H1 (cell line): ENCODE measurements at regions of chrX and their contacts with region 1.

Region 1: GRCh38 chrX:102899940-102900916 is 36.8 kb upstream of the RAB40AL start:
- DNase-seq: peak in 1 of 2 experiments; percentile 84
- H3K4me3 ChIP-seq: no peak overlapping the region
- H3K27ac ChIP-seq: no peak overlapping the region
- H3K4me1 ChIP-seq: no peaks in the 10 kb centered on the region
- H3K27me3 ChIP-seq: no peaks in the 10 kb centered on the region
- CTCF ChIP-seq: peak; percentile 58 to 67 (median 66)
- EP300 ChIP-seq: no peak
- POLR2A ChIP-seq: no peak
- RAD21 ChIP-seq: peak; percentile 60 to 64

Region 2: DNA sequence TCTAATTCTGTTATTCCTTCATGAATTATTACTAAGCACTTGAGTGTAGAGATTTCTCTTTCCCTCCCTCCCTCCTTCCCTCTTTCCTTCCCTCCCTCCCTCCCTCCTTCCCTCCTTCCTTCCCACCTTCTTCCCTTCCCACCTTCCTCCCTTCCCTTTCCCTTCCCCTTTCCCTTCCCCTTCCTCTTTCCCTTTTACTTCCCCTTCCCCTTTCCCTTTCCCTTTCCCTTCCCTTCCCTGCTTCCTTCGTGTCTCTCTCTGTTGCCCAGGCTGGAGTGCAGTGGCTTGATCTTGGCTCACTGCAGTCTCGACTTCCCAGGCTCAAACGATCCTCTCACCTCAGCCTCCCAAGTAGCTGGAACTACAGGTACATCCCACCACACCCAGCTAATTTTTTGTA is 12.5 kb before region 1 on chrX:
- CTCF ChIA-PET with region 1: interaction called, 10 read pairs
- POLR2A ChIA-PET with region 1: no interaction called
- DNase-seq: no peak
- H3K4me3 ChIP-seq: no peak overlapping the region
- H3K27ac ChIP-seq: no peak overlapping the region
- H3K4me1 ChIP-seq: no peaks in the 10 kb centered on the region
- H3K27me3 ChIP-seq: no peaks in the 10 kb centered on the region
- CTCF ChIP-seq: no peak
- EP300 ChIP-seq: no peak
- POLR2A ChIP-seq: no peak
- RAD21 ChIP-seq: no peak

Region 3: GRCh38 chrX:102930990-102931756 is 30.9 kb after region 1 on chrX:
- CTCF ChIA-PET with region 1: no interaction called
- POLR2A ChIA-PET with region 1: no interaction called
- DNase-seq: no peak
- H3K4me3 ChIP-seq: no peak overlapping the region
- H3K27ac ChIP-seq: no peak overlapping the region
- H3K4me1 ChIP-seq: no peaks in the 10 kb centered on the region
- H3K27me3 ChIP-seq: no peaks in the 10 kb centered on the region
- CTCF ChIP-seq: no peak
- EP300 ChIP-seq: no peak
- POLR2A ChIP-seq: no peak
- RAD21 ChIP-seq: no peak